BJ (cell line): ENCODE measurements at regions of chr1 and their contacts with region 1.

Region 1: DNA sequence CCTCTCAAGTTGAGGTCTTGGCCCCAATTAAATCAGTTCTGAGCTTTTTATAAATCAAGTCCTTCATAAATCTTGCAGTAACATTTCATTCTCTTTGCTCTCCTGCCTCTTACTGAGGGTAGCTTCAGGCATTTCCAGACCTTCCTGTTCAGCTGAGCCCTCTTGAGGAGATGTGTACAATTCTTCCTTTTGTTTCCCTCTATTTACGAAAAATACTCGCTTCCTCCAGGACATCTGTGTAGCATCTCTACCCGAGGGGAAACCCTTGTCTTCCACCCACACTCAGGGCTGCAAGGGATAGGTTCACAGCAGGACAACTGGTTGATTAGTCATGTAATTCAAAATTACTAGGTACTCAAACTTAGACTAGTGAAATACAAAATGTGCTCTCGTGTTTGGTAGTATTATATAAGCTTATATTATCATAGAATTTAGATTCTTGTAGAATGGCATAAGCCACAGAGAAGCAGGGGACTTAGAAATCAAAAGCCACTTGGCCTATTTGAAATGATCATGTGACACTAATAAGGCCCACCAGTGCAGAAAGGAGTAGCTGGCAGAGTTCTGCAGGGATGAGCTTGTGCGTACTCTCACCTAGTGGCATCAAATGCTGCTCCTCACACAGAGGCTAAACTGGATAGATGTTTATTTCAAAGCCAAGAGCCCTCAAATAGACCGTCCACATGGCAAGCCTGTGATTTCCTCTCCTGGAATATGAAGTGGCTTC is 126.7 kb downstream of the GDAP2 start:
- DNase-seq: no peak
- H3K4me3 ChIP-seq: no peak overlapping the region
- H3K27me3 ChIP-seq: no peaks in the 10 kb centered on the region
- CTCF ChIP-seq: no peak

Region 2: DNA sequence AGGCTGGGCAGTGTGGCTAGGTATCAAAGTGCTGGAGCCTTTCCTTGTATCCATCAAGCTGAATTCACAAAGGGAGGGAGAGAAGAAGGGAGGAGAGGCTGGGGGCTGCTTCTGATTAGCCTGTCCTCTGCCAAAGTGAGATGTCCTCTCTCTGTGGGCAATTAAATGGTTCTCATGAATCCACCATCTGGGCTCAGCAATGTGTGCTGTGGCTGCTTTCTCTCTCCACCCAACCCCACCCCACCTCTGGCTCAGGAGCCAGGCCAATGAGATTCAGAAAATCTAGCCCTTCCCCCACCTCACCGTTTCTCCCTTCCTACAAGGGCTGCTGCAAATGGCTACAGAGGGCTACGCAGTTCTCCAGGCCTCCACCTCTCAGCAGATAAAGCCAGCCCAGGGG is 42.2 kb before region 1 on chr1:
- CTCF ChIA-PET with region 1: no interaction called
- POLR2A ChIA-PET with region 1: no interaction called
- DNase-seq: no peak
- H3K4me3 ChIP-seq: no peak overlapping the region
- H3K27me3 ChIP-seq: no peaks in the 10 kb centered on the region
- CTCF ChIP-seq: no peak

Region 3: DNA sequence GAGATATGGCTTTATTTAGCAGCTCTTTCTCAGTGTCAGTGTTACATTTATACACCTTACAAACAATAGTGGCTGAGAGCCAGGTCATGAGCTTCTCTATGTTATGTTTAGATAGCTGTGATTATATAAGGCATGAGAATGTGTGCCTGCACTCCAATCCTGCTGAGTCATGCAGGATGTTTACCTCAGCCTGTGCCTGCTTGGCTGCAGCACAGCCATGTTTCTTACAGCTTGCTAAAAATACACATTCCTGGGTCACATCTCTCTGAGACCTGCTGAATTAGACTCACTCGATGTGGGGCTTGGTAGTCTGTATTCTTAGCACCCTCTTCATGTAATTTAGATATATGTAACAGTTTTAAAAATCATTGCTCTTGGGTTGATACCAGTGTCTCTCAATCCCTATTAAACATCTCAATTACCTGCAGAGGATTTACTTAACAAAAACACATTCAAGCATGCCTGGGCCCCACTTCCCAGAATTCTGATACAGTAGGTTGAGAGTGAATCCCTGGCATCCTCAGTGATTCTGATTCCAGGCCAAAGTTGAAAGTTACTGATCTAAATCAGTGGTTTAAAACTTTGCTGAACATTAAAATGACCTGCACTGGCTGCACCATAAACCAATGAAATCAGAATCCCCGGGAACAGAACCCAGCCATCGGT is 19.2 kb after region 1 on chr1:
- CTCF ChIA-PET with region 1: no interaction called
- POLR2A ChIA-PET with region 1: no interaction called
- DNase-seq: peak; percentile 75
- H3K4me3 ChIP-seq: no peak overlapping the region
- H3K27me3 ChIP-seq: no peaks in the 10 kb centered on the region
- CTCF ChIP-seq: no peak

Region 4: DNA sequence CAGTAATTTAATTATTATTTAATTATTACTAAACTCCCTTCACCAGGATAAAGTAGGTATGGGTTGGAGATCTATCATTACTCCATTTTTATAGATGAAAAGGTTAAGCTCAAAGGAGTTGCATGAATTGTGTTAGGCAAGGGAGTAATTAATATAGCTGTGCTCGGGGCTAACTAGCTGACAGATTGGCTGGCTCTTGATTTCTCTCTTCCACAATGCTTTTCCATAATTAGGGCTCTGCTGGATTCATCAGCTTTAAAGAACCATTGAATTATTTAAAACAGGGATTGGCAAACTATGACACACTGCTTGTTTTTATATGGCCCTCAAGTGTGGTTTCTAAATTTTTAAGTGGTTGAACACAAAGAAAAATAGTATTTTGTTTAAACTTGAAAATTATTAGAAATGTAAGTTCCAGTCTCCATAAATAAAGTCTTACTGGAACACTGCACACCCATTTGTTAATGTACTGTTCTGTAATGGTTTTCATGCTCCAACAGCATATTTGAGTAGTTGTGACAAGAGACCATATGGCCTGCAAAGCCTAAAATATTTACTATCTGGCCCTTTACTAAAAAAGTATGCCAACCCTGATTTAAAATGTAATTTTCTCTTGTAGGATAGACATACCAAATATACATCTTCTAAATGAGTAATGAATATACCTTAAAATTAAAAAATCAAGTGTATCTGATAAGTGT is 50.3 kb after region 1 on chr1:
- CTCF ChIA-PET with region 1: no interaction called
- POLR2A ChIA-PET with region 1: interaction called, 13 read pairs
- DNase-seq: no peak
- H3K4me3 ChIP-seq: no peak overlapping the region
- H3K27me3 ChIP-seq: no peaks in the 10 kb centered on the region
- CTCF ChIP-seq: no peak